ENCODE measurements at regions of chr9 and their contacts with region 1.

Region 1: GRCh38 chr9:78035383-78035993 is 3.9 kb upstream of the GNAQ start:
- DNase-seq: no peak
- H3K4me3 ChIP-seq: no peak overlapping the region
- H3K27ac ChIP-seq: peak overlapping the region; percentile 20
- H3K4me1 ChIP-seq: peaks cover 32% of the 10 kb centered on the region
- H3K27me3 ChIP-seq: peaks cover 13% of the 10 kb centered on the region
- CTCF ChIP-seq: peak; percentile 86

Region 2: GRCh38 chr9:77731930-77732329 is 303.6 kb before region 1 on chr9:
- intact Hi-C with region 1: no loop called
- DNase-seq: no peak
- H3K4me3 ChIP-seq: no peak overlapping the region
- H3K27ac ChIP-seq: no peak overlapping the region
- H3K4me1 ChIP-seq: peaks cover 25% of the 10 kb centered on the region
- H3K27me3 ChIP-seq: no peaks in the 10 kb centered on the region
- CTCF ChIP-seq: no peak

Region 3: GRCh38 chr9:77977210-77977611 is 58.3 kb before region 1 on chr9:
- intact Hi-C with region 1: loop called (anchors 10 kb)
- DNase-seq: peak; percentile 62
- H3K4me3 ChIP-seq: peak overlapping the region; percentile 26
- H3K27ac ChIP-seq: peak overlapping the region; percentile 80
- H3K4me1 ChIP-seq: peaks cover 51% of the 10 kb centered on the region
- H3K27me3 ChIP-seq: no peaks in the 10 kb centered on the region
- CTCF ChIP-seq: peak; percentile 65